ENCODE measurements at regions of chr10 and their contacts with region 1.

Region 1: GRCh38 chr10:89369156-89370105 is 8.4 kb upstream of the IFIT1B start:
- DNase-seq: no peak
- H3K4me3 ChIP-seq: no peak overlapping the region
- H3K27ac ChIP-seq: no peak overlapping the region
- H3K4me1 ChIP-seq: peaks cover 9% of the 10 kb centered on the region
- H3K27me3 ChIP-seq: no peaks in the 10 kb centered on the region
- CTCF ChIP-seq: peak; percentile 44 to 60

Region 2: GRCh38 chr10:89296220-89296648 is 73.2 kb before region 1 on chr10:
- CTCF ChIA-PET with region 1: no interaction called
- dilution Hi-C with region 1: no loop called
- in situ Hi-C with region 1: no loop called
- intact Hi-C with region 1: loop called (anchors 1 kb)
- DNase-seq: no peak
- H3K4me3 ChIP-seq: no peak overlapping the region
- H3K27ac ChIP-seq: no peak overlapping the region
- H3K4me1 ChIP-seq: peaks cover 2% of the 10 kb centered on the region
- H3K27me3 ChIP-seq: no peaks in the 10 kb centered on the region
- CTCF ChIP-seq: no peak